CD4-positive, alpha-beta memory T cell (primary cell): ENCODE measurements at regions of chr11 and their contacts with region 1.

Region 1: DNA sequence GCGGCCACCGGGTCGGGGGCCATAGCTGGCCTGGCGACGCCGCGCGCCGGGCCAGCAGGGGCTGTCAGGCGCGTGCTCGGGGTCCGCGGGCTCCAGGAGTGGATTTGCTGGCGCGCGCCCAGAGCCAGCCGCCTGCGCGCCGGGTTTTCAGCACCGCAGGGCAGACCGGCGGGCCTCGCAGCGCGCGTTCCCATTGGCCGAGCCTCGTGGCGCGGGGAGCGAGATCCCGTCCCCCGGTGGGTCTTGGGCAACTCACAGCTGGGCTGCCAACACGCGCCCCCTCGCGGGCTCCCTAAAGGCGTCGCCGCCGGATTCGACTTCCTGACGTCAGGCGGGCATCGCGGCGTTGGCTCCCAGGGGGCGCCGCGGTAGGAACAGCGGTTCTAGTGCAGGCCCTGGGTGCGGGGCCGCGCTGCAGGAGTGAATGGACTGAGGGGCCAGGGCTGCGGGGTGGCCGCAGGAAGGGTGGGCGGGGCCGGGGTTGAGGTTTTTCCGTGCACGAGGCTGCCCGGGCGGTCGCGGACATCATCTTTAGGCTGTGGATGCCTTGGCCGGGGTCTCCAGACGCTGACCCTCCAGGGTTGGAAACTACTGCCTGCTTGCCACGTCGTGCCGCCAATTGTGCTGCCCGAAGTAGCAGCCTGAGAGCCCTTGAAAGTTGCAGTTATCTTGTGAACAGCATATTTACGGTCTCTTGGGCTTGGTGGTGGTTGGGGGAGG is at the start of gene FADS1:
- DNase-seq: peak; percentile 54 to 79 (median 68)
- H3K4me3 ChIP-seq: peak within 1 kb of the TSS; percentile 73 to 77
- H3K4me3 Mint-ChIP-seq: peak within 1 kb of the TSS; percentile 84 to 97 (median 92)
- H3K27ac ChIP-seq: peak within 1 kb of the TSS; percentile 34
- H3K27ac Mint-ChIP-seq: peak within 1 kb of the TSS; percentile 5 to 96 (median 83)
- H3K4me1 ChIP-seq: peaks cover 21% of the 10 kb centered on the region
- H3K4me1 Mint-ChIP-seq: peaks cover 3 to 18% (median 7%) of the 10 kb centered on the region in 4 donors
- H3K27me3 ChIP-seq: peaks cover 10% of the 10 kb centered on the region
- H3K27me3 Mint-ChIP-seq: peaks cover 4 to 19% of the 10 kb centered on the region in 2 donors
- total RNA-seq, gene FADS1: 1.7 to 2.2 TPM

Region 2: DNA sequence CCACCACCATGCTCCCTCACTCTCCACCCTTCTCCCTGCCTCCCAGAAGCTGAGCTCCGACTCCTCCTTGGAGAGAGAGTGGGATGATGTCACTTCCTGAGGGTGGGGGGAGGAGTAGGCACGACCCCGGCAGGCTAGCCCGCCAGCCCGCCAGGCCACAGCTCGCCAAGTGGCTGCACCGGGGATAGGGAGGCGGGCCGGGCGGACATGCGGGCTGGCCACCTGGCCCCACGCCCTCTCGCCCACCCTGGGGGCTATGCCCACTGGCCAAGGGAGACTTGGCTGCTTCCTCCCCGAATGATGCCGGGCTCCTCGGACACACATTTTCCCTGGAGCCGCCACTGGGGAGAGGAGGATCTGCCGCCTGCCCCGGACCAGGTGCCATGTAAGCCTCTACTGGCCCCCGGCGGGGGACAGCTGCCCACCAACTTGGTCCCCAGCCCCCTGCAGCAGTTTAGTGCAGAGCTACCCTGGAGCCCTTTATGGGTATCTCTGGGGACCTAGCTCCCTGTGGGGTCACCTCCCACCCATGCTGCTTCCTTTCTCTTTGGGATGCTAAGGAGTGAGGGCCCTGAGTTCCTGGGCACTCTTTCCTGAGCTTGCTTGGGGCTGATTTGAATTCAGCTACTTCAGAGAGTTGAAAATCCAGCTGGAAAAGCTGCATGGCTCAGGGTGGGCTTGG is 98.1 kb before region 1 on chr11:
- CTCF ChIA-PET with region 1: no interaction called
- POLR2A ChIA-PET with region 1: no interaction called
- intact Hi-C with region 1: no loop called
- DNase-seq: no peak
- H3K4me3 ChIP-seq: no peak overlapping the region
- H3K4me3 Mint-ChIP-seq: no peak overlapping the region
- H3K27ac ChIP-seq: no peak overlapping the region
- H3K27ac Mint-ChIP-seq: no peak overlapping the region
- H3K4me1 ChIP-seq: no peaks in the 10 kb centered on the region
- H3K4me1 Mint-ChIP-seq: peaks cover 0 to 4% (median 0%) of the 10 kb centered on the region in 4 donors
- H3K27me3 ChIP-seq: no peaks in the 10 kb centered on the region
- H3K27me3 Mint-ChIP-seq: no peaks in the 10 kb centered on the region

Region 3: DNA sequence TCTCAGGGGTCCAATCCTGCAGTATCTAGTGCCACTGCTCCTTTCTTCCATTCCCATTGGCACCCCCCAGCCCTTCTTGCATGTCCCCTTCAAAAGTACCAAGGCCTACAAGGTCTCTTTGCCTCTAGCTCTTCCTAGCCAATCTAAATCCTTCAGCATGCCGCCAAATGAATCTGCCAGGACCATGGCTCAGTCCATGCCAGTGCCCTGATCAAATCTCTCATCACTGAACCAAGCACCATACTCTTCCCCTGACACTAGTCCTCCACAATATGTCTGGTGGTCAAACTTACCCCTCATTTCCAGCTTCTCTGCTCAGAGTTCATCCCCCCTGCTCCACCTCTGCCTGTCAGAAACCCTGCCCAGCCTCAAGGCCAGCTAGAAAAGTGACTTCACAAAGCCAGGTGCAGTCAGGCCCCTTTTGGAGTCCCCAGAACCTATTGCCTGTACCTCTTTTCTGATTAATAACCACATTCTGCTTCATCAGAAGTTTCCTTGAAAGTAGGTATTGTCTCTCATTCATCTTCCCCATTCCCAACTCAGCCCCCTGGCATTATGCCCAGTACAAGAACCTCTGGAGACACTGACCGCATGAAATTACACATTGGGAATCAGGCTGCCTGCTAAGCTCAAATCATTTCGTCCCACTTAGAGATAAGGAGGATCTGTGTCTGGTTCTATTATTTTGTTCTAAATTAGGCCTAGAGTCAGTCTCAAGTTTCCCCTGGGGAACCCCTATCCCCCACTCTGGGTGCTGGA is 12.8 kb before region 1 on chr11:
- CTCF ChIA-PET with region 1: interaction called, 95 read pairs
- POLR2A ChIA-PET with region 1: interaction called, 5 read pairs
- intact Hi-C with region 1: no loop called
- DNase-seq: no peak
- H3K4me3 ChIP-seq: no peak overlapping the region
- H3K4me3 Mint-ChIP-seq: no peak overlapping the region
- H3K27ac ChIP-seq: no peak overlapping the region
- H3K27ac Mint-ChIP-seq: peak overlapping the region in 1 of 7 donors; percentile 24
- H3K4me1 ChIP-seq: no peaks in the 10 kb centered on the region
- H3K4me1 Mint-ChIP-seq: no peaks in the 10 kb centered on the region
- H3K27me3 ChIP-seq: no peaks in the 10 kb centered on the region
- H3K27me3 Mint-ChIP-seq: no peaks in the 10 kb centered on the region

Region 4: DNA sequence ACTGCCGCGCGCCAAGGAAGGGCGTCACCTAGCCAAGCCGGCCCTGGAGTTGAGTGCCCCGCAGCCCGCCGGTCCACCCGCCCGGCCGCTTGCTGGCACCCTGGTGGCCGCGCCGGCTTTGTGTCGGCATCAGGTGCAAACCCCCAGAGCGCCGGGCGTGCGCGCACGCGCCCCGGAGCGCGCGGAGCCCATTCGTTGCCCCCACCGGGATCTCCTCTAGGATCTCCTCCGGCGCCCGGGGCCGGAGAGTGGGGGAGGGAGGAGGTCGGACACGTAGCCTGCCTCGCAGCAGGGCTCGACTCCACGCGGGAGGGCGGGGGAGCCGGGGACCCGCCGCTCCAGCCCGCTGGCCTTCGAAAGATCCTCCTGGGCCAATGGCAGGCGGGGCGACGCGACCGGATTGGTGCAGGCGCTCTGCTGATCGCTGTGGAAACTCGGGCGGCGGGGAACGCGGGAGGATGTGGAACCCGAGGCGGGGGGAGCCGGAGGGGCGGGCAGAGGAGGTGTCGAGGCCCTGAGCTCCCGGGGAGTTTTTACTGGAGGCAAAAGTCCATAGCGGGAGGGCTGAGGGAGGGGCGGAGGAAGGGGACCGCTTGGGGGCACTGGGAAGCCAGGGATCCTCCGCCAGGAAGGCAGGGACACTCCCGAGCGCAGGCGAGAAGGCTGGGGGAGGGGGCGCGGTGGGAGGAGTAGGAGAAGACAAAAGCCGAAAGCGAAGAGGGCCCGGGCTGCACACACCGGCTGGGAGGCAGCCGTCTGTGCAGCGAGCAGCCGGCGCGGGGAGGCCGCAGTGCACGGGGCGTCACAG is 10.9 kb after region 1 on chr11 and contains the start of gene FADS2:
- CTCF ChIA-PET with region 1: interaction called, 8 read pairs
- POLR2A ChIA-PET with region 1: interaction called, 19 read pairs
- intact Hi-C with region 1: no loop called
- DNase-seq: peak; percentile 46 to 85 (median 67)
- H3K4me3 ChIP-seq: peak within 1 kb of the TSS; percentile 23 to 49
- H3K4me3 Mint-ChIP-seq: peak within 1 kb of the TSS; percentile 80 to 89 (median 85)
- H3K27ac ChIP-seq: peak within 1 kb of the TSS; percentile 18
- H3K27ac Mint-ChIP-seq: peak within 1 kb of the TSS in 6 of 7 donors; percentile 46 to 93 (median 58)
- H3K4me1 ChIP-seq: peaks cover 20% of the 10 kb centered on the region
- H3K4me1 Mint-ChIP-seq: peaks cover 4 to 28% (median 16%) of the 10 kb centered on the region in 4 donors
- H3K27me3 ChIP-seq: peaks cover 3% of the 10 kb centered on the region
- H3K27me3 Mint-ChIP-seq: peaks cover 13 to 22% of the 10 kb centered on the region in 2 donors
- total RNA-seq, gene FADS2: 0.22 to 0.73 TPM

Region 5: DNA sequence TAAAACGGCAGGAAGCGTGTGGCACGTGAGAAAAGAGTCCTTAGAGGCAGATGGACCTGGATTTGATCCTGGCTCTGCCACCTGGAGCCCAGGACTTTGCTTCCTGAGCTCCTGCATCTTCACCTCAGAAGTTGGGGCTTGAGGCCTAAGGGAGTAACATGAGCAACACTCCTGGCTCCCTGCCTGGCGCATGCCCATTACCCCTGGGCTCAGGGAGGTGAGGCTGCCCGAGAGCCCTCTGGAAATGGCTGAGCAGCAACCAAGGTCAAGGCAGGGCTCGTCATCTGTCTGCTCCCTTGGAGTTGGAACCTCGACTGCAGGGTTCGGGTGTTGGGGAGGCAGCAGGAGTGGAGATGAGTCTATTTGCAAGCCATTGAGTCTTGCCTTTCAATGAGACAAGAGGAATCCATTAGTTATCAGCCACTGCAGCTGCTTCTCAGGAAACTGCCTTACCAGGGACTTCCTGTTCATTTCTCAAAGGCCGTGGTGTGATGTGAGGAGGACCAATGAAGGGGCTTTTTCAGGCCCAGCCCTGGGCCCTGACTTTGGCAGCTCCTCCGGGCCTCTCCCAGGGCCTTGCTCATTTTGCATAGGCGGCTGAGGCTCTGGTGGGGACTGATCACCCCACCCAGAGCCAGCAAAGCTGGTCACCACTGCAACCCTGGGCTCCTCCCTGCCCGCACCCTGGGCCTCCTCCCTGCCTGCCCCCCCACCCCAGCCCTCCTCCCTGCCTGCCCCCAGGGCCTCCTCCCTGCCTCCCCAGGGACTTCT is 17.6 kb after region 1 on chr11:
- CTCF ChIA-PET with region 1: interaction called, 8 read pairs
- POLR2A ChIA-PET with region 1: interaction called, 22 read pairs
- intact Hi-C with region 1: no loop called
- DNase-seq: peak; percentile 29 to 74 (median 49)
- H3K4me3 ChIP-seq: no peak overlapping the region
- H3K4me3 Mint-ChIP-seq: peak overlapping the region in 5 of 8 donors; percentile 28 to 70 (median 59)
- H3K27ac ChIP-seq: peak overlapping the region; percentile 28
- H3K27ac Mint-ChIP-seq: peak overlapping the region in 6 of 7 donors; percentile 33 to 98 (median 60)
- H3K4me1 ChIP-seq: peaks cover 20% of the 10 kb centered on the region
- H3K4me1 Mint-ChIP-seq: peaks cover 13 to 32% (median 23%) of the 10 kb centered on the region in 4 donors
- H3K27me3 ChIP-seq: peaks cover 3% of the 10 kb centered on the region
- H3K27me3 Mint-ChIP-seq: peaks cover 6 to 11% of the 10 kb centered on the region in 2 donors

Region 6: DNA sequence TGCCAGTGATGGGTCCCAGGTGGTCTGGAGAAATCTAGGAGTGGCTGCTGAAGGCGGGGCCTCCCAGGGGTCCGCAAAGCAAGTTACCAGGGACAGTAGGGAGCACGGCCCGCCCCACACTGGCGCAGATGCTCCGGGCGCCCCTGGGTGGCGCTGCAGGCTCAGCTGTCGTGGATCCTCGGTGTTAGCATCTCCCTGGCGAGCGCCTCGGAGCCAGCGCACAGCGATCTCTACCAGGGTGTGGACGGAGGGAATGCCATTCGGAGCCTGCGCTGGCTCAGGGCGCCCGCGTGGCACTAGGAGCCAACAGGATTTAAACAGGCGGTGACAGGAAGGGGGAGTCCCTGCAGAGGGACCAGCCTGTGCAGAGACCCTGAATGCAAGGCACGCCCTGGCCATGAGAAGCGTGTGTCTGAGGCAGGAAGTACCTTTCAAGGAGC is 54.3 kb after region 1 on chr11:
- CTCF ChIA-PET with region 1: no interaction called
- POLR2A ChIA-PET with region 1: no interaction called
- intact Hi-C with region 1: no loop called
- DNase-seq: peak; percentile 48 to 64 (median 55)
- H3K4me3 ChIP-seq: no peak overlapping the region
- H3K4me3 Mint-ChIP-seq: peak overlapping the region in 6 of 8 donors; percentile 62 to 80 (median 68)
- H3K27ac ChIP-seq: no peak overlapping the region
- H3K27ac Mint-ChIP-seq: peak overlapping the region in 1 of 7 donors; percentile 72
- H3K4me1 ChIP-seq: peaks cover 4% of the 10 kb centered on the region
- H3K4me1 Mint-ChIP-seq: peaks cover 4 to 7% (median 5%) of the 10 kb centered on the region in 4 donors
- H3K27me3 ChIP-seq: no peaks in the 10 kb centered on the region
- H3K27me3 Mint-ChIP-seq: peaks cover 2 to 6% of the 10 kb centered on the region in 2 donors

Region 7: DNA sequence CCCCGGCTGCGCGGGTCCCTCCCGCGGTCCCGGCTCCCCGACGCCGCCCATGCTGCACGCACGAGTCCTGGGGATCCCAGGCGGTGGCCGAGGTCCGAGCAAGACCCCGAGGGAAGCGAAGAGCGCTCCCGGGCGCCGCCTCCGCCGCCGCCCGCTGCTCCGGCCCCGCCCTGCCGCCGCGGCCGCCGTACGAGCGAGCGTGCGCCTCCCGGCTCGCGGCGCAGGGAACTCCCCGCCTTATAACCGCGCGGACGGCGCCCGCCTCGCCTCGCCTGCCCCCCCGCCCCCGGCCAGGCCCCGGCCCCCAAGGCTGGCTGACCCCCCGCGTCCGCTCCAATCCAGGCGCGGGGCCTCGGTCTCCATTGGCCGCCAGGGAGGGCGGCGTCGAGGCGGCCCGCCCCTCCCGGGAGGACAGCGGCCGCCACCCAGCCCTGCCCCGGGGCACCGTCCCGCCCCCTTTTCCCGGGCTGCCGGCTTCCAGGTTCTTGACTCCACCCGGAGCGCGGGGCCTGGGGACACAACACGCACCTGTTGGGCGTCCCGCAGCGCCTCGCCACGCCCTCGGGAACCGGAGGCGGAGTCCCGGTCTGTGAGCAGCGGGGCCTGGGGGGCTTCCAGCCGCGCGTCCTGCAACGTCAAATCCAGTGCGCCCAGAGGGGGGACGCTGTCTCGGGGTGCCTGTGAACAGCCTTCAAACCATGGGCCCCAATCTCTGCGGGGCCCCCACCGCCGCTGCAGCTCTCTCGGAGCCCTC is 74.6 kb after region 1 on chr11 and contains the start of gene FADS3:
- CTCF ChIA-PET with region 1: no interaction called
- POLR2A ChIA-PET with region 1: interaction called, 3 read pairs
- intact Hi-C with region 1: loop called (anchors 5 kb)
- DNase-seq: peak; percentile 56 to 78 (median 62)
- H3K4me3 ChIP-seq: peak within 1 kb of the TSS; percentile 29 to 45
- H3K4me3 Mint-ChIP-seq: peak within 1 kb of the TSS; percentile 81 to 91 (median 86)
- H3K27ac ChIP-seq: peak within 1 kb of the TSS; percentile 69
- H3K27ac Mint-ChIP-seq: peak within 1 kb of the TSS; percentile 49 to 92 (median 82)
- H3K4me1 ChIP-seq: peaks cover 11% of the 10 kb centered on the region
- H3K4me1 Mint-ChIP-seq: peaks cover 2 to 14% (median 6%) of the 10 kb centered on the region in 4 donors
- H3K27me3 ChIP-seq: no peaks in the 10 kb centered on the region
- H3K27me3 Mint-ChIP-seq: no peaks in the 10 kb centered on the region
- total RNA-seq, gene FADS3: 5.9 to 7.8 TPM

Region 8: GRCh38 chr11:61967116-61967923 is 150.4 kb after region 1 on chr11 and contains the start of gene FTH1:
- CTCF ChIA-PET with region 1: no interaction called
- POLR2A ChIA-PET with region 1: interaction called, 17 read pairs
- intact Hi-C with region 1: no loop called
- DNase-seq: peak; percentile 91 to 95 (median 92)
- H3K4me3 ChIP-seq: peak within 1 kb of the TSS; percentile 99 to 100
- H3K4me3 Mint-ChIP-seq: peak within 1 kb of the TSS; percentile 92 to 97 (median 95)
- H3K27ac ChIP-seq: peak within 1 kb of the TSS; percentile 89
- H3K27ac Mint-ChIP-seq: peak within 1 kb of the TSS; percentile 90 to 99 (median 98)
- H3K4me1 ChIP-seq: peaks cover 38% of the 10 kb centered on the region
- H3K4me1 Mint-ChIP-seq: peaks cover 36 to 74% (median 50%) of the 10 kb centered on the region in 4 donors
- H3K27me3 ChIP-seq: no peaks in the 10 kb centered on the region
- H3K27me3 Mint-ChIP-seq: no peaks in the 10 kb centered on the region
- total RNA-seq, gene FTH1: 695 to 763 TPM